ENCODE measurements at regions of chr15 and their contacts with region 1.

Region 1: GRCh38 chr15:60703207-60703933 is 224.4 kb upstream of the ICE2 start:
- DNase-seq: no peak
- ATAC-seq: no peak

Region 2: GRCh38 chr15:60660290-60661051 is 42.9 kb before region 1 on chr15:
- intact Hi-C with region 1: no loop called
- DNase-seq: no peak
- ATAC-seq: peak; percentile 91

Region 3: GRCh38 chr15:60721707-60722106 is 18.3 kb after region 1 on chr15:
- intact Hi-C with region 1: loop called (anchors 2 kb)
- DNase-seq: no peak
- ATAC-seq: no peak

Region 4: DNA sequence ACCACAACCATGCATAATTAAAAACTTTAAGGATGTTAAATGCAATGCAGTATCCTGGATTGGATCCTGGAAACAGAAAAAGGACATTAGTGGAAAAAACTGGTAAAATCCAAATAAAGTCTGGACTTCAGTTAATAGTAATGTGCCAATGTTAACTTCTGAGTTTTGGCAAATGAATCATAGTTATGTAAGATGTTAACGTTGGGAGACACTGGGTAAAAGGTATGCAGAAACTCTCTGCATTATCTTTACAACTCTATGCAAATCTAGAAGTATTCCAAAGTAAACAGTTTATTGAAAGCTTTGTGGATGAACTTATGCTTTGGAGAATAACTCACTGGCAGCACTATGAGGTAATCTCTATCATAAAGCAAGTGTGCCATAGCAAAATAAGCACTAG is 168.4 kb after region 1 on chr15:
- intact Hi-C with region 1: no loop called
- DNase-seq: no peak
- ATAC-seq: no peak